ENCODE measurements at regions of chr19 and their contacts with region 1.

Region 1: GRCh38 chr19:55611983-55612645 is 6.7 kb downstream of the ZNF865 start:
- DNase-seq: no peak

Region 2: DNA sequence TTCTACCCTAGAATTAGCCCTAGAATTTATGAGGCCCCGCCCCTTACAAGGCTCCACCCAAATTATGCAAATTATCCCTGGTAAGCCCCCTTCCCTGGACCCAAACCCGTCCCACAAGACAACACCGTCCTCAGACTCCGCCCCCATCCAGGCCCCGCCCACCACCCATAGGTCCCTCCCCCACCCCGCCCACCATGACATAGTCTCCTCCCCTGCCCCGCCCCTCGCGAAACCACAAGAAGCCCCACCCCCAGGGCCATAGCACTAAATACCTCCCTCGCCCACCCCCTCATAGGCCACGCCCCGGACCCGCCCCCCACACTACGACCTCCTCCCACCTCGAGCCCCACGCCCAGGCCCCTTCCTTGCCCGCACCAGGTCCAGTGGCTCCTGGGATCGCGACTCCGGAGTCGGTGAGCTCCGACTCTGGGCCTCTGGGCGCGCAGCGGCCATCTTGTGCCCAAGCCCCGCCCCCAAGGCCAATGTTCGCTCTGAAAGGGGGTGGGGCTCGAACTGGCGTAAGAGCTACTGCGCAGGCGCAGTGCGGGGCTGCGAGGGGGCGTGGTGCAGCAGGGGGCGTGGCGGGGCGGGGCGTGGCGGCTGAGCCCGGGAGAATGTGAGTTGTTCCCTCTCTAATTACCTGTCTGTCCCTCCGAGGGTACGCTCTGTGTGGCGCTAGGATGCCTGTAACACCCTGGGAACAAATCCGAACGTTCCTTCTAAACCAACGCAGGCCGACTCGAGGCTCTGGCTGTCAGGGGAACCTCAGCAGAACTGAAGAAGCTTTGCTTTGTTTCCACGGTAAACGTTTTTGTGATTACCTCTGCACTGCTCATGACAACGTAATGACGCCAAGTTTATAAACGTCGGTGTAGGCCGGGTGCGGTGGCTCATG is 12.2 kb after region 1 on chr19 and contains the start of gene ZNF784:
- CTCF ChIA-PET with region 1: interaction called, 3 read pairs
- POLR2A ChIA-PET with region 1: interaction called, 10 read pairs
- DNase-seq: peak; percentile 94